Activated CD4-positive, alpha-beta T cell treated with anti-CD3 and anti-CD28 coated beads for 36 hours (primary cell): ENCODE measurements at regions of chr19 and their contacts with region 1.

Region 1: GRCh38 chr19:8321060-8321985 is at the starts of genes NDUFA7 and RPS28:
- DNase-seq: peak; percentile 99
- ATAC-seq: peak; percentile 94
- H3K4me3 Mint-ChIP-seq: peak within 1 kb of the TSS; percentile 97
- H3K27ac Mint-ChIP-seq: peak within 1 kb of the TSS; percentile 97
- H3K4me1 Mint-ChIP-seq: peaks cover 22% of the 10 kb centered on the region
- H3K27me3 Mint-ChIP-seq: no peaks in the 10 kb centered on the region
- total RNA-seq, gene NDUFA7: 90.9 to 112 TPM
- total RNA-seq, gene RPS28: 1,994 to 2,316 TPM

Region 2: DNA sequence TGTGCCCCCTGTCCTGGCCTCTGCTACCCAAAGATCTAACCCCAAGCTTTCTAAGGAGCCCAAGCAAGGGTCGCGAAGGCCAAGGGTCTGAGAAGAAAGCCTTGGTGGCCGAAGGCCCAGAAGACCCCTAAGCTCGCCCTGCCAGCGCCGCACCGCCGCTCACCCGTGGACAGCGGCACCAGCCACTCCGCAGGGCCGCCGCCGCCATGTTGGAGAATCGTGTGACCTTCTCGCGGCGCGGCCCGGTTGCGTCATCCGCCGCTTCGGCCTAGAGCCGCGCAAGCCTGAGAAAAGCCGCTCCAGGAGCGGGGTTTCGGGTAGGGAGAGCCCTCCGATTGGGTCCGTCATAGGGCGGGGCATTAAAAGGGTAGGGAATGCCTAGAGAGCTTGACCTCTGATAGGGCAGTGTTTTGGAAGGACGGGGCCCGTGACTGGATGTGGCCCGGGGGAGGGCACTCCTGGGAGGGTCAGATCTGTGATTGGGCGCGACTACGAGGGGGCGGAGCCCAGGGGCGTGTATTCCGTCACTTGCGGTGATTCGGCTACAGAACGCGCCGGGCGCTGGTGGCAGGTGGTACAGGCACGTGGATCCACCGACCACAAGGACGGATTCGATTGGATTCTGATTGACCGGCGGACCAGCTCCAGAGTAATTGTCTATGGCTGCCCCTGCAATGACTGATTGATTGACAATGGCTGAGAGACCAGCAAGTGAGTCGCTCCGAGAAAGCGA is 377.7 kb before region 1 on chr19 and contains the start of gene TIMM44:
- CTCF ChIA-PET with region 1: no interaction called
- POLR2A ChIA-PET with region 1: no interaction called
- intact Hi-C with region 1: loop called (anchors 1 to 5 kb)
- DNase-seq: peak; percentile 99
- ATAC-seq: peak; percentile 99
- H3K4me3 Mint-ChIP-seq: peak within 1 kb of the TSS; percentile 90
- H3K27ac Mint-ChIP-seq: peak within 1 kb of the TSS; percentile 90
- H3K4me1 Mint-ChIP-seq: peaks cover 30% of the 10 kb centered on the region
- H3K27me3 Mint-ChIP-seq: no peaks in the 10 kb centered on the region
- total RNA-seq, gene TIMM44: 80.4 to 84.0 TPM

Region 3: DNA sequence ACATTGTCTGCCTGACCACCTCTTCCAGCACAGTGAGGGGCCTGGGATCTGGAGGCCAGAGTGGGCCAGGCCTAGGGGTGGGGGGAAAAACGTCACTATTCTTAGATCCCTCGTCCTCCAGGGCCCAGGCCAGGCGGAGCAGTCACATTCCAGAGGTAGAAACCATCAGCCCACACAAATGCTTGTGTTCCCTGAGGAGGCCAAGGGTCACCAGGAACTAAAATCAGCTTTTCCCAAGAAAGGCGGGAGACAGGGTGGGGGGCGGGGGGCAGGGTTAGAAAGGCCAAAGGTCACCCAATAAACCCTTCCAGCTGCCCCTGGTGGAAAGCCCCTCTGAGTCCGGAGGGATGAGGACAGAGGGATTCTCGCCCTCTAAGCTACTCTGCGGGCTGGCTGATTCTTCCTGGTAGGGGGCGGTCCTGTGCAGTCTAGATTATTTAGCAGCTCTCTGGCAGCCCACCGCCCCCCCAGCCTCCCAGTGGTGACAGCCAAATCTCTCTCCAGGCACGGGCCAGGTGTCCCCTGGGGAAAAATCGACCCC is 292.3 kb before region 1 on chr19:
- CTCF ChIA-PET with region 1: no interaction called
- POLR2A ChIA-PET with region 1: no interaction called
- intact Hi-C with region 1: no loop called
- DNase-seq: no peak
- ATAC-seq: no peak
- H3K4me3 Mint-ChIP-seq: no peak overlapping the region
- H3K27ac Mint-ChIP-seq: no peak overlapping the region
- H3K4me1 Mint-ChIP-seq: no peaks in the 10 kb centered on the region
- H3K27me3 Mint-ChIP-seq: no peaks in the 10 kb centered on the region

Region 4: GRCh38 chr19:8208922-8209461 is 112.3 kb before region 1 on chr19 and contains the start of gene CERS4:
- CTCF ChIA-PET with region 1: no interaction called
- POLR2A ChIA-PET with region 1: no interaction called
- intact Hi-C with region 1: loop called in 1 of 2 experiments (anchors 1 kb)
- DNase-seq: peak; percentile 89
- ATAC-seq: peak; percentile 83
- H3K4me3 Mint-ChIP-seq: peak within 1 kb of the TSS; percentile 83
- H3K27ac Mint-ChIP-seq: peak within 1 kb of the TSS; percentile 94
- H3K4me1 Mint-ChIP-seq: peaks cover 24% of the 10 kb centered on the region
- H3K27me3 Mint-ChIP-seq: no peaks in the 10 kb centered on the region
- total RNA-seq, gene CERS4: 21.2 to 21.8 TPM

Region 5: GRCh38 chr19:8307965-8308866 is 13.1 kb before region 1 on chr19 and contains the start of gene CD320:
- CTCF ChIA-PET with region 1: interaction called, 14 read pairs
- POLR2A ChIA-PET with region 1: no interaction called
- intact Hi-C with region 1: loop called (anchors 1 kb)
- DNase-seq: peak; percentile 90
- ATAC-seq: peak; percentile 91
- H3K4me3 Mint-ChIP-seq: peak within 1 kb of the TSS; percentile 90
- H3K27ac Mint-ChIP-seq: peak within 1 kb of the TSS; percentile 79
- H3K4me1 Mint-ChIP-seq: peaks cover 34% of the 10 kb centered on the region
- H3K27me3 Mint-ChIP-seq: no peaks in the 10 kb centered on the region
- total RNA-seq, gene CD320: 39.9 to 41.4 TPM

Region 6: DNA sequence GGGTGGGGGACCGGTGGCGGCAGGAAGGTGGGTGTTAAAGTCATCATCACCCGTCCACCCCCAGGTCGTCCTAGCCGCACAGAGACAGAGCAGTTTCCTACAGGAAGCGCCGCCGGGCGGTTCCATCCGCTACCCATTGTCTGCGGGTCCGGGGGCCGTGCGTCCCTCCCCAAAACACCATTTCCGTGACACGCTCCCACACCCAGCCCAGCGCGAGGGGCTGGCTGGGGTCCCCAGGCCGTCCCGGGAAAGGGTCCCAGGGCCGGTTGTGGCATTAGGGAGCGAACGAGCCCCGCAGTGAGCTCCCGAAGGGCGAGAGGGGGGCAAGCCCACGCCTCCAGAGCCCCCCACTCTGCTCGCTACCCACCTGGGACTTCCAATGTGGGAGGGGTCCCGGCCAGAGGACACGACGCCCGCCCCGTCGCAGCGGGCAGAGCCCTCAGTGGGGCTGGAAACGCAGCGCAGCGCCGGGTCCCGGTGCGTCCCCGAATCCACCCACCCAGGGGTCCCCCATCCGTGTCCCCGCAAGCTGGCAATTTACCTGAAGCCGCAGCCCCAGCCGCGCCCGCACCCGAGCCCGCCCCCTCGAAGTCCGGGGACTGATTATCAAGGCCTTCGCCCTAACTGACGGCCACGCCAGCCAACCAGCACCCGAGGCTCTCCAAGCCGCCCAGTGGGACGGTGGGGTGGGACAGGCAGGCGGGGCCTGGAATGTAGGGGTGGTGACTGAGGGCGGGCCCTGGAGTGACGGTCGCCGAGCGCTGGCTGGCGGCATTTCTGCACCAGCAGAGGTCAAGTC is 21.6 kb after region 1 on chr19 and contains the start of gene KANK3:
- CTCF ChIA-PET with region 1: no interaction called
- POLR2A ChIA-PET with region 1: interaction called, 5 read pairs
- intact Hi-C with region 1: loop called in 1 of 2 experiments (anchors 1 kb)
- DNase-seq: peak; percentile 96
- ATAC-seq: peak; percentile 100
- H3K4me3 Mint-ChIP-seq: peak within 1 kb of the TSS; percentile 64
- H3K27ac Mint-ChIP-seq: no peak within 1 kb of the TSS
- H3K4me1 Mint-ChIP-seq: peaks cover 6% of the 10 kb centered on the region
- H3K27me3 Mint-ChIP-seq: peaks cover 12% of the 10 kb centered on the region
- total RNA-seq, gene KANK3: 0.98 to 1.1 TPM

Region 7: DNA sequence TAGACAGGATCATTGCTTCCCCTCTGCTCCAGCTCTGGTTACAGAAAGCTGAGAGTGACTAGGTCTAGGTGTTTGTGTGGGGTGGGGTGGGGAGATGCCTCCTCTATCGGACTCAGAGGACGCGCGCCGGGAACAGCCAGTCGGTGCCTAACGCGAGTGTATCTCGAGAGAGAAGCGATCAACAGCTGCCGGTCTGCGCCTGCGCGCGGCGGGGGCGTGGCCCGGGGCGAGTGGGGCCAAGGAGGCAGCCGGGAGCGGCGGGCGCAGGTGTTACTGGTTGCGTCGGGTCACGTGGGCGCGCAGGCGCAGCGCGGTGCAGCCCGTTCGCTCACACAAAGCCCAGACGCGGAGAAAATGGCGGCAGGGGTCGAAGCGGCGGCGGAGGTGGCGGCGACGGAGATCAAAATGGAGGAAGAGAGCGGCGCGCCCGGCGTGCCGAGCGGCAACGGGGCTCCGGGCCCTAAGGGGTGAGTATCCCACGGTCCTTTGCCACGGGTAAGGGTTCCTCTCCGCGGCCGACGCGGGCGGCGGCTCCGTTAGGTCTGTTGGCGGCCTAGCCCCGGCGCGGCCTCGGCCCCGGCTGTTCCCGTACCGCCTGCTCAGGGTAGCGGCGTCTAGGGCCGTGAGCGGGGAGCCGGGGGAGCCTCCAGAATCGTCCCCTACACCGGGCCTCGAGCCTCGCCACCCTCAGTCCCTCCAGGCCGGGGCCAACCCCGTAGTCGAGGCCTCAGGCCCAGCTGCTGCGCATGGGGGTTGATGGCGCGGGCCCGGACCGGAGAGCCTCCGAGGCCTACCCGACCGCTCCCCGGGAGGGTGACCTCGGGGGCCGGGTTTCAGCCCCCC is 123.5 kb after region 1 on chr19 and contains the start of gene HNRNPM:
- CTCF ChIA-PET with region 1: no interaction called
- POLR2A ChIA-PET with region 1: no interaction called
- intact Hi-C with region 1: loop called in 1 of 2 experiments (anchors 1 kb)
- DNase-seq: peak; percentile 100
- ATAC-seq: peak; percentile 93
- H3K4me3 Mint-ChIP-seq: peak within 1 kb of the TSS; percentile 94
- H3K27ac Mint-ChIP-seq: peak within 1 kb of the TSS; percentile 97
- H3K4me1 Mint-ChIP-seq: peaks cover 39% of the 10 kb centered on the region
- H3K27me3 Mint-ChIP-seq: no peaks in the 10 kb centered on the region
- total RNA-seq, gene HNRNPM: 250 to 304 TPM